Activated naive CD4-positive, alpha-beta T cell treated with anti-CD3 and anti-CD28 coated beads for 36 hours (primary cell): ENCODE measurements at regions of chr7 and their contacts with region 1.

Region 1: DNA sequence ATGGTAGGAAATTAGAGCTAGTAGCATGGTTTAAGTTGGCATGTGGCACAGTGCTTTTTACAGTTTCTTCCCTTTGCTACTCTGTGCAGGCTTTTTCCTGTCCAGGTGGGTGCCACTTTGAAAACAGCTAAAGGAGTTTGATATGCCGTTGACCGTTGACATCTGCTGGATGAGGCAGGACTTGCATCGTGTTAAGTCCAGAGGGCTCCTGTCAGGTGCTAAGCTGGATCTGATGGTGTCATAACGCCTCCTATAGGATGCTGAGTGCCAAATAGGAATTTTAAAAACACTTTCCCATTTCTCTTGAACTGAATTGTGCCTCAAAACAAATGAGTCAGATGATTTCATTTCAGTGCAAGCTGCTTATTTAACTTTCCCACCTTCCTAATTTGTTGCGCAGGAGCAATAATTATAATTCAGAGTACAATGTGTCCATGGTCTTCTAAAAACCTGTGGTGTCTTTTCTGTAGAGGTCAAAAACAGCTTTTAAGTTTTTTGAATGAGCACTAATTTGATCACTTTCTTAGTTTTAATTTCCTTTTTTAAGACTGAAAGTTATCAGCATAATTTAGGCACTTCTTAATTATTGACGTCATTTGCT is 178.3 kb downstream of the CDCA7L start:
- DNase-seq: peak; percentile 59
- H3K4me3 Mint-ChIP-seq: no peak overlapping the region
- H3K27ac Mint-ChIP-seq: no peak overlapping the region
- H3K4me1 Mint-ChIP-seq: peaks cover 16% of the 10 kb centered on the region
- H3K27me3 Mint-ChIP-seq: no peaks in the 10 kb centered on the region

Region 2: GRCh38 chr7:20778063-20778721 is 989.2 kb before region 1 on chr7:
- CTCF ChIA-PET with region 1: no interaction called
- intact Hi-C with region 1: loop called (anchors 1 kb)
- DNase-seq: peak; percentile 14
- H3K4me3 Mint-ChIP-seq: no peak overlapping the region
- H3K27ac Mint-ChIP-seq: no peak overlapping the region
- H3K4me1 Mint-ChIP-seq: peaks cover 20% of the 10 kb centered on the region
- H3K27me3 Mint-ChIP-seq: peaks cover 75% of the 10 kb centered on the region

Region 3: DNA sequence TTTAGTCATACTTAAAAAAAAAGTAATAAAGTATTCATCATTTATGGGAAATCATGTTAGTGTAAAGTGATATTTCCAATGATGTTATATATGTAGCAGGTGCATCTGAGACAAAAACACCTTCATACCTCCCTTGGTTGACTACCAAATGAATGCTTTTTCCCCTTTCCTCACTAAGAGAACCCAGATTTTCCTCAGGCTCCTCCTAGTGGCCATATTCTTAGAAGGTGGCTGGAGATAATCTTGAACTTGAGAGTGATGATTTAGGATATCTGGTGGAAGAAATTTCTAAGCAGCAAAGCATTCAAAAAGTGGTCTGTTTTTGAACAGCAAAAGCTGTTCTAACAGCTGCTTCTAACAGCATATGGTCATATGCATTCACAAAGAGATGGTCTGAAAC is 241.4 kb before region 1 on chr7:
- CTCF ChIA-PET with region 1: no interaction called
- intact Hi-C with region 1: loop called (anchors 5 kb)
- DNase-seq: no peak
- H3K4me3 Mint-ChIP-seq: no peak overlapping the region
- H3K27ac Mint-ChIP-seq: no peak overlapping the region
- H3K4me1 Mint-ChIP-seq: no peaks in the 10 kb centered on the region
- H3K27me3 Mint-ChIP-seq: no peaks in the 10 kb centered on the region

Region 4: DNA sequence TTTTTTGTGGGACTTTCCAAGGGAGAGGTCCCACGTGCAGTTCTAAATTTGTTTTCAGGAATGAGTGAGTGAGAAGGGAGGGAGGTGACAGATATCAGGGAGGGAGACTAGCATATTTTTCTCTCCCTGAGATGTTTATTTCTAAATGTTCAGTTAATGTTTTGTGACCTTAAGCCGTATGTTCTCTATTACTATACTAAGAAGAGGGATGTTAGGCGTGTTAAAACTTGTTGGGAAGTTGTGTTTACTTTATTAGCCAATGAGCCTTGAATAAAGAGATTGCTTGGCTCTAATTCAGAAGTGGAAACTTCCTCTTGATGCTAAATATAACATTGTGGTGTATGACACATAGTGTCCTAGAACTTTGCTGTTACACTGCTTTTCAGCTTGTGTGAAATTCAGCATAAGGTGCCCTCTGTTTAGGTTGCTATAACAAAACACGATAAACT is 187.3 kb before region 1 on chr7:
- CTCF ChIA-PET with region 1: no interaction called
- intact Hi-C with region 1: loop called (anchors 10 kb)
- DNase-seq: no peak
- H3K4me3 Mint-ChIP-seq: no peak overlapping the region
- H3K27ac Mint-ChIP-seq: peak overlapping the region; percentile 38
- H3K4me1 Mint-ChIP-seq: peaks cover 8% of the 10 kb centered on the region
- H3K27me3 Mint-ChIP-seq: peaks cover 4% of the 10 kb centered on the region

Region 5: DNA sequence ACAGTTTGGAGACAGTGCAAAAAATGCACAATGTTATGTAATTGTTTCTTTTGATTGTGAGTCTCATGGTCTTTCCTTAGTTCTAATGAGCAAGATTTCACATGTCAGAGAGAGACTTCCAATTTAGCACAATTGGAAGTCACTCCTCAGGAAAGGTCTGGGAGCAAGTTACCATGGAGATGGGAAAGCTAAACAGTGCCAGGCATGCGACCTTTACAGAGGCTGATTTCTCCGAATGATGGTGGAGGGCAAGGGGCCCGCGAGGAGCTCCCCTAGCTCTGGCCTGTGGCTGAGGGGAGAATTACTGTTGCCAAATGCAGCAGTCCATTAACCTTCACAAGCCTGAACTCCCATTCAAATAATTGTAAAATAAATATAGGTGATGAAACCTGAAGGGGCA is 119.0 kb after region 1 on chr7:
- CTCF ChIA-PET with region 1: no interaction called
- intact Hi-C with region 1: no loop called
- DNase-seq: no peak
- H3K4me3 Mint-ChIP-seq: no peak overlapping the region
- H3K27ac Mint-ChIP-seq: no peak overlapping the region
- H3K4me1 Mint-ChIP-seq: no peaks in the 10 kb centered on the region
- H3K27me3 Mint-ChIP-seq: no peaks in the 10 kb centered on the region

Region 6: DNA sequence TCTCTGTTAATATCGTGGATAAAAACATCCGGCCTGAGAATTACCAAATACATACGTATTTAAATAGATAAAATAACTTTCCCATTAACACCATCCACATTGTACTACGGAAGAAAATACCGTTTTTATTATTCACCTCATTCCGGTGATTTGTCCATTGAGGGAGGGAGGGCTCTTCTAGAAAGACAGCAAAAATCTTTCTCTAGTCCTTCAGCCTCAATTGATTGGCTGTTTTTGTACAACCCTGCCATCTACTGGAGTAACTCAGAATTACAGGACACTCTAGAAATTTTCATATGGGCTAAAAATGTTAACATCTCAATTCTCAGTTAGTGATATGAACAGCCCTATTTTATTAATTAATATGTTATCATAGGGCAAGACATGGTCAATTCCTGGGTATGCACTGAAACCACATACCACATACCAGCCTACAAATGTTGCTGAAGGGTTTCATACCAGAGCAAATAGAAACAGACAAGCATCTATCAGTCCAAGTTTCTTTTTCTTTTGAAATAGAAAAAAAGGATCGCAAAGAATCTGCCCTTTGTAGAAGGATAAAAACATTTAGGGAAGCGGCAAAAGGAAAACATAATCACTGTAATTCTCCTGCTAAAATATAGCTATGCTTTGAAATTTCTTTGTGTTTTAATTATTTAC is 234.1 kb after region 1 on chr7:
- CTCF ChIA-PET with region 1: interaction called, 4 read pairs
- intact Hi-C with region 1: loop called (anchors 1 kb)
- DNase-seq: peak; percentile 24
- H3K4me3 Mint-ChIP-seq: no peak overlapping the region
- H3K27ac Mint-ChIP-seq: no peak overlapping the region
- H3K4me1 Mint-ChIP-seq: peaks cover 3% of the 10 kb centered on the region
- H3K27me3 Mint-ChIP-seq: no peaks in the 10 kb centered on the region